Heart right ventricle (tissue), 16 donors: ENCODE measurements at regions of chr7 and their contacts with region 1.

Region 1: DNA sequence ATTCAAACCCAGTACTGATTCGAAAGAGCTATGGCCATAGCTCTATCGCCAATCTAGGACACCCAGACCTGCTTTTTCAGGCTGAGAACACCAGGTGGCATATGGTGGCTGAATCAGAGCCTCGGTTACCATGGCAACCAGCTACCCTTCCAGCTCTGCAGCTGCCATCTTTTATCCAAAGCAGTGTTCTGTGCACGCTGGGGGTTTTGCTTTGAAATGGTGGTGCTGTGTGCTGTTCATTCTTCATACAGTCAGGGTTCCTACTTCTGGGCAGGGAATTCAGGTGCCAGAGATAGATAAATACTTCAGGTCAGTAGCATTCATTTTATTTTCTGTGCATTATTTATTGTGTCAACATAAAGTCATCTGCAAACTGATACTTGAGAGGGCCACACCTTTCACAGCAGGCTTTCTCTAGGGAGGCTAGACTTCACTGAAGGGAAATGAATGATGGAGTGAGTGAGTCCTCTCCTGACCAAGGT is 85.4 kb downstream of the AKR1D1 start:
- DNase-seq: peak; percentile 23 to 87
- ATAC-seq: peak; percentile 72 to 86 (median 81)
- H3K4me3 ChIP-seq: no peak overlapping the region
- H3K27ac ChIP-seq: no peak overlapping the region
- H3K4me1 ChIP-seq: no peaks in the 10 kb centered on the region
- H3K27me3 ChIP-seq: no peaks in the 10 kb centered on the region
- CTCF ChIP-seq: peak; percentile 47 to 83 (median 73)

Region 2: DNA sequence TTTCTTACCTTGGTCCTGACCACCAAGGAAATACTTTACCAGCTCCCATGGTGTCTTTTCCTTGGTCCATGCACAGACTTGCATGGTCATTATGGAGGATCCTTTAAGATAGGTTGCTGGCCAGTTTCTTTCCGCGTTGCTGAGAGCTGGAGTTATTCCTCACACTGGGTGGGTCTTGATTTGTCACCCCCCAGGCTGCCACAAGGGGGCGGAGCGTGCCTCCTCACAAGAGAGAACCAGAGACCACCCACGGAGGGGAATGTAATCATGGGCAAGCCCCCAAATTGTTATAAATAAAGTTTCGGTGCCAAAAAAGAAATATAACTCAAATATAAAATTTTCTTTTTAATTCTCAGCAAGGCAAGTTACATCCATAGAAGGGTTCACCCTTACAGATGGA is 287.9 kb after region 1 on chr7:
- intact Hi-C with region 1: loop called in 1 of 10 experiments (anchors 10 kb)
- DNase-seq: no peak
- ATAC-seq: no peak
- H3K4me3 ChIP-seq: no peak overlapping the region
- H3K27ac ChIP-seq: no peak overlapping the region
- H3K4me1 ChIP-seq: no peaks in the 10 kb centered on the region
- H3K27me3 ChIP-seq: no peaks in the 10 kb centered on the region
- CTCF ChIP-seq: peak in 6 of 9 donors; percentile 9 to 30 (median 24)

Region 3: GRCh38 chr7:138459413-138460175 is 298.0 kb after region 1 on chr7:
- intact Hi-C with region 1: loop called in 2 of 10 experiments (anchors 5 to 10 kb)
- DNase-seq: peak in 1 of 2 donors; percentile 97
- ATAC-seq: peak; percentile 97 to 99 (median 98)
- H3K4me3 ChIP-seq: peak overlapping the region in 7 of 10 donors; percentile 79 to 96 (median 87)
- H3K27ac ChIP-seq: peak overlapping the region in 5 of 10 donors; percentile 48 to 99 (median 98)
- H3K4me1 ChIP-seq: peaks cover 0 to 21% (median 10%) of the 10 kb centered on the region in 9 donors
- H3K27me3 ChIP-seq: no peaks in the 10 kb centered on the region
- CTCF ChIP-seq: peak in 7 of 9 donors; percentile 12 to 46 (median 20)